ENCODE measurements at regions of chr10 and their contacts with region 1.

Region 1: DNA sequence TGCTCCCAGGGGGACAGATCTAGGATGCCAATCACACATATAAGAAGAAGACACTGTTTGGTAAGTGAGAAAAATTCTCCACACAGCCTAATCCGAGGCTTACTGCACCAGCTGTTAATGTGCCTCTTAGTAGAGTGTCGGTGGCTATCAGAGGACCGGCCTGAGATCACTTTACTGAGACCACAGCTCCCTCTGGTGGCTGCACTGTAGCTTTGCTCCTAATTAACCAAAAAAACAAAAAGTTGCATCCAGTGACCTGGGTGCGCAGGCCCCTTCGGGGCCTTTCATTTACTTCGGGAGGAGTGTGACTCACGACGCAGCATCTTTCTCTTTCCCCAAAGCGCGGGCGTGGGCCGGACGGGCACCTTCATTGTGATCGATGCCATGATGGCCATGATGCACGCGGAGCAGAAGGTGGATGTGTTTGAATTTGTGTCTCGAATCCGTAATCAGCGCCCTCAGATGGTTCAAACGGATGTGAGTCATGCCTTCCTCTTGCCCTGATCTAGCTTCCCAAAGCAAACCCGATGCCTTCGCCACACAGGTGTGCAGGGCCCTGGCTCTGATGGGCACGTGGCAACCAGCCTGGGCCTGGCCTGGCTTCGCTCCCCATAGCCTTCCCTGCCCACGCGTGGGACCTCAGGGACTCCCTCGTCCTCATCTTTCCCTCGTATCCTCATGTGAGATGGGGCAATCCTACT is 56.7 kb downstream of the MKI67 start:
- DNase-seq: peak; percentile 79
- H3K4me3 Mint-ChIP-seq: no peak overlapping the region
- H3K27ac Mint-ChIP-seq: peak overlapping the region; percentile 70
- H3K4me1 Mint-ChIP-seq: peaks cover 25% of the 10 kb centered on the region
- H3K27me3 Mint-ChIP-seq: no peaks in the 10 kb centered on the region
- CTCF ChIP-seq: peak; percentile 85

Region 2: GRCh38 chr10:127906548-127907377 is 162.7 kb before region 1 on chr10 and contains the start of gene PTPRE:
- CTCF ChIA-PET with region 1: interaction called, 23 read pairs
- POLR2A ChIA-PET with region 1: interaction called, 5 read pairs
- intact Hi-C with region 1: loop called (anchors 1 kb)
- DNase-seq: peak; percentile 69
- H3K4me3 Mint-ChIP-seq: peak within 1 kb of the TSS; percentile 62
- H3K27ac Mint-ChIP-seq: no peak within 1 kb of the TSS
- H3K4me1 Mint-ChIP-seq: peaks cover 7% of the 10 kb centered on the region
- H3K27me3 Mint-ChIP-seq: no peaks in the 10 kb centered on the region
- CTCF ChIP-seq: peak; percentile 90
- total RNA-seq, gene PTPRE: 21.8 and 34.6 TPM in 2 replicates

Region 3: DNA sequence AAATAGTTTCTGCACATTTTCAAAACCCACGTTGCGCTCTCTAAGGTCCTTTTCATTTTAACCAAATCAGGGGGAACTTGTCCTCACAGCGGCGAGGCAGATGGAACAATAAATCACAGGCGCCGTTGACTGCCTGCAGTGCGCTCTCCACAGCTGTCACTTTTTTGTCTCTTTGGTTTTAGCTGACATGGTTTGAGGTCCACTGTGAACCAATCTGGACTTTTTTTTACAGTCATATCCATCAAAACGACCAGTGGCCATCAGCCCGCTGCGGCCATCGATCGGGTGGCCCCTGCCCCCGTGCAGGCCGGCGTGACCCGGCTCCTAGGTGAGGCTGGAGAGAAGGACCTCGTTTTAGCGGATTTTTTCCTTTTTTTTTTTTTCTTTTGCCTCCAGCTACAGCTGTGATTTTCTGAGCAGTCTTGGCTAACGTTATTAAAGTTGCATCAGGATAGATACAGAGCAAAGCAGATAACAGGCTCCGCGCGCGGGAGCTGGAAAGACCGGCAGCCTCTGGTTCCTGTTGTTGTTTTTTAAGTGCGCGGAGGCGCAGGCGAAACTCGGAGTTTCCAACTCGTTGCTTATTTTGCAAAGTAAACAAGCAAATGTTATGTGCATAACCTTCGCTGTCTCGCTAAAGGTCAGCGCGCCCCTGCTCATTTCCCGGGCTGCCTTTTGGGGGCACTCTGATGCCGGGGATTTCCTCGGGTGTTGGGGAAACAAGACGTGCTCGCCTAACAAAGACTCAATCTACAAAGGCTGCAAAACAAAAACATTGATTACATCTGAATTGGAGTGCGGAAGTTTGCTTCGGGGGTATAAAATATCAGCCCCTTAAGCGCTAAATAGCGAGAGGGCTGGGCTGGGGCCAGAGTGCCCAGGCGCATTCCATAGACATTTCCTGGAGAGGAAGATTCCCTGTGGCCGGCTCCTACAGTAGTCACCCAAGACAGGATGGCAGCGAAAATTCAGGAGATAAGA is 471.6 kb after region 1 on chr10:
- CTCF ChIA-PET with region 1: no interaction called
- POLR2A ChIA-PET with region 1: no interaction called
- intact Hi-C with region 1: no loop called
- DNase-seq: no peak
- H3K4me3 Mint-ChIP-seq: no peak overlapping the region
- H3K27ac Mint-ChIP-seq: no peak overlapping the region
- H3K4me1 Mint-ChIP-seq: no peaks in the 10 kb centered on the region
- H3K27me3 Mint-ChIP-seq: peaks cover 24% of the 10 kb centered on the region
- CTCF ChIP-seq: no peak